ENCODE measurements at regions of chr7 and their contacts with region 1.

Region 1: GRCh38 chr7:108736221-108736891 is 166.7 kb downstream of the DNAJB9 start:
- DNase-seq: no peak
- H3K4me3 ChIP-seq: no peak overlapping the region
- H3K27ac ChIP-seq: no peak overlapping the region
- H3K4me1 ChIP-seq: no peaks in the 10 kb centered on the region
- H3K27me3 ChIP-seq: no peaks in the 10 kb centered on the region
- CTCF ChIP-seq: no peak
- POLR2A ChIP-seq: no peak

Region 2: GRCh38 chr7:108794466-108794865 is 58.1 kb after region 1 on chr7:
- intact Hi-C with region 1: no loop called
- DNase-seq: no peak
- H3K4me3 ChIP-seq: no peak overlapping the region
- H3K27ac ChIP-seq: no peak overlapping the region
- H3K4me1 ChIP-seq: no peaks in the 10 kb centered on the region
- H3K27me3 ChIP-seq: no peaks in the 10 kb centered on the region
- CTCF ChIP-seq: no peak
- POLR2A ChIP-seq: no peak

Region 3: GRCh38 chr7:110675383-110676103 is 1939.2 kb after region 1 on chr7:
- intact Hi-C with region 1: loop called (anchors 5 kb)
- DNase-seq: no peak
- H3K4me3 ChIP-seq: no peak overlapping the region
- H3K27ac ChIP-seq: no peak overlapping the region
- H3K4me1 ChIP-seq: no peaks in the 10 kb centered on the region
- H3K27me3 ChIP-seq: no peaks in the 10 kb centered on the region
- CTCF ChIP-seq: no peak
- POLR2A ChIP-seq: no peak